ENCODE measurements at regions of chr3 and their contacts with region 1.

Region 1: DNA sequence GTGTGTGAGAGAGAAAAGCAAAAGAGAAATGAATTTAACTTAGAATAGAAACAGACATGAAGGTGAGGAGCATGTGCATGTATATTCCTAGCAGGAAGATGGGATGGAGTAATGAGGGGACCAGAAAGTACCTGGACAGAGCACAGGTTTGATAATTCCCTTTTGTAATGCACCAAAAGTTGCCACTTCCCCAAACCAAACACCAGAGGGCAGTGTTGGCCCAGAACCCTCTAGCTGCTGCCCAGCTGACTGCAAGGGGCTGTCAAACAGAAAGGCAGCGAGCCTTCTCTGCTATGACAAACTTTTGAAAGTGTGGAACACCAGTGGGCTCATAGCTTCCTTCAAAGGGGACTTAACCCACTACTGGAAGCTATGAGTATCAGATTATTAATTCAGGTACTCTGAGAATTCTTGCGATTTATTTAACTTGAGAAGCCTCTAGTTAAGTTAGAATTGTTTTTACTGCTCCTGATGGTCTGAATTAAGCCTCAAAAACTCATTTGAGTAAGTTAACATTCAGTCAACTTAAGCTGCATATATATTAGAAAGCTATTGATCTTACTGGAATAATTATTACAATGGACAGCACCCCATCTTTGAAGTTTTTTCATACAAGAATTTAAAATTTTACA is 234.9 kb downstream of the NEK10 start:
- DNase-seq: peak in 1 of 2 experiments; percentile 51
- H3K4me3 ChIP-seq: no peak overlapping the region
- H3K27ac ChIP-seq: no peak overlapping the region
- H3K4me1 ChIP-seq: no peaks in the 10 kb centered on the region
- H3K27me3 ChIP-seq: no peaks in the 10 kb centered on the region
- CTCF ChIP-seq: peak; percentile 89

Region 2: GRCh38 chr3:27166888-27167287 is 32.6 kb after region 1 on chr3:
- CTCF ChIA-PET with region 1: no interaction called
- POLR2A ChIA-PET with region 1: no interaction called
- intact Hi-C with region 1: no loop called
- DNase-seq: peak; percentile 35 to 61
- H3K4me3 ChIP-seq: no peak overlapping the region
- H3K27ac ChIP-seq: no peak overlapping the region
- H3K4me1 ChIP-seq: no peaks in the 10 kb centered on the region
- H3K27me3 ChIP-seq: no peaks in the 10 kb centered on the region
- CTCF ChIP-seq: no peak

Region 3: DNA sequence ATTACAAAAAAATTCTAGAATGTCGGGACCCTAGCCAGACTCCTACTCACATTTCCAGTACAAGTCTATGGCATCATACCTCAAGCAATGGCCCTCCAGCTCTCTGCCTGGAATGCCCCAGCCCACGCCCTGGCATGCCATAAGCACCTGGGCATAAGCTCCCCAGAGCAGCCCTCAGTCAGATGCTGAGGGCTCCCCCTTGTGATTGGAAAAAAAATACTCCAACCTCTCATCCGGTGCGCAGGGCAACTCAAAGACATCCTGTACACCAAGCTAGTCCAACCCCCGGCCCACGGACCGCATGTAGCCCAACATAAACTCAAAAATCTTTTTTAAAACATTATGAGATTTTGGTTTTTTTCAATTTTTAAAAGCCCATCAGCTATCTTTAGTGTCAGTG is 119.5 kb after region 1 on chr3:
- CTCF ChIA-PET with region 1: interaction called, 25 read pairs
- POLR2A ChIA-PET with region 1: no interaction called
- intact Hi-C with region 1: loop called (anchors 1 kb)
- DNase-seq: peak; percentile 37 to 57
- H3K4me3 ChIP-seq: no peak overlapping the region
- H3K27ac ChIP-seq: no peak overlapping the region
- H3K4me1 ChIP-seq: no peaks in the 10 kb centered on the region
- H3K27me3 ChIP-seq: no peaks in the 10 kb centered on the region
- CTCF ChIP-seq: peak; percentile 65

Region 4: DNA sequence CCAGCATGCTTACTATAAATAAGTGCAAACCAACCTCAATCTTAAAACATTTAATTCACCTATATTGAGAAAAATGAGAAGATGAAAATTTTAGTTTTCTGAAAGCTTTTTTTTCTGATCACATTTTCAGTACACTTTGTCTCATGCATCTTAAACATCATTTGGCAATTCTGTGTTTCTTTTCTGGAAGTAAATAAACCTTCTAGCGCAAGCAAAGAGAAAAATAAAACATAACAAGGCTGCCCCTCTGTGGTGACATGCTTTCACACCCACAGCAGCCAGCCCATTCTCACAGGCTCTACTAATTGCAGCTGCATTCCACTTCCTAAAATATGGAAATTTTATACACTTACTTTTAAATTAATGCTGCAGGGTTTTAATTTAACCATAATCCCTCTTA is 144.8 kb after region 1 on chr3:
- CTCF ChIA-PET with region 1: no interaction called
- POLR2A ChIA-PET with region 1: no interaction called
- intact Hi-C with region 1: loop called (anchors 1 kb)
- DNase-seq: peak in 1 of 2 experiments; percentile 7
- H3K4me3 ChIP-seq: no peak overlapping the region
- H3K27ac ChIP-seq: no peak overlapping the region
- H3K4me1 ChIP-seq: no peaks in the 10 kb centered on the region
- H3K27me3 ChIP-seq: no peaks in the 10 kb centered on the region
- CTCF ChIP-seq: peak; percentile 49

Region 5: GRCh38 chr3:27467545-27467944 is 333.3 kb after region 1 on chr3:
- CTCF ChIA-PET with region 1: no interaction called
- POLR2A ChIA-PET with region 1: no interaction called
- intact Hi-C with region 1: loop called (anchors 10 kb)
- DNase-seq: no peak
- H3K4me3 ChIP-seq: no peak overlapping the region
- H3K27ac ChIP-seq: no peak overlapping the region
- H3K4me1 ChIP-seq: no peaks in the 10 kb centered on the region
- H3K27me3 ChIP-seq: no peaks in the 10 kb centered on the region
- CTCF ChIP-seq: peak; percentile 63

Region 6: DNA sequence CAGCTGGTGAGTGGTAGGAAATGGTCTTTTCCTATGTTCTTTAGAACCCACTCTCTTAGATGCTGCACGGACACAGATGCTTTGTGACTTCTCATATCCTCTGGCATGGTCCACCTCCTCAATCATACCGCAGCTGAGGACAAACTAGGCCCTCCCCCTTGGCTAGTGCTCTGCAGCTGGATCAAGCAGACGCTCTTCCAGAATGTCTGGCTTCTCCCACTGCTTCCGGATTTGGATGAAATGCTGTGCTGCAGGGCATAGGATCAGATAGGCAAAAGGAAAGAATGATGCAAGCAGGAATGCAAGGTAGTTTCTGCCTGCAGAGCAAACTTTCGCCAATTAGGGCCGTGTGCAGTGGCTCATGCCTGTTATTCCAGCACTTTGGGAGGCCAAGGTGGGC is 425.6 kb after region 1 on chr3:
- CTCF ChIA-PET with region 1: no interaction called
- POLR2A ChIA-PET with region 1: no interaction called
- intact Hi-C with region 1: no loop called
- DNase-seq: no peak
- H3K4me3 ChIP-seq: no peak overlapping the region
- H3K27ac ChIP-seq: no peak overlapping the region
- H3K4me1 ChIP-seq: no peaks in the 10 kb centered on the region
- H3K27me3 ChIP-seq: no peaks in the 10 kb centered on the region
- CTCF ChIP-seq: no peak

Region 7: GRCh38 chr3:27779176-27779575 is 644.9 kb after region 1 on chr3:
- CTCF ChIA-PET with region 1: no interaction called
- POLR2A ChIA-PET with region 1: no interaction called
- intact Hi-C with region 1: no loop called
- DNase-seq: no peak
- H3K4me3 ChIP-seq: no peak overlapping the region
- H3K27ac ChIP-seq: no peak overlapping the region
- H3K4me1 ChIP-seq: no peaks in the 10 kb centered on the region
- H3K27me3 ChIP-seq: no peaks in the 10 kb centered on the region
- CTCF ChIP-seq: no peak